ENCODE measurements at regions of chr6 and their contacts with region 1.

Region 1: GRCh38 chr6:13908955-13909381 is 15.8 kb upstream of the RNF182 start:
- DNase-seq: no peak
- ATAC-seq: peak; percentile 66

Region 2: DNA sequence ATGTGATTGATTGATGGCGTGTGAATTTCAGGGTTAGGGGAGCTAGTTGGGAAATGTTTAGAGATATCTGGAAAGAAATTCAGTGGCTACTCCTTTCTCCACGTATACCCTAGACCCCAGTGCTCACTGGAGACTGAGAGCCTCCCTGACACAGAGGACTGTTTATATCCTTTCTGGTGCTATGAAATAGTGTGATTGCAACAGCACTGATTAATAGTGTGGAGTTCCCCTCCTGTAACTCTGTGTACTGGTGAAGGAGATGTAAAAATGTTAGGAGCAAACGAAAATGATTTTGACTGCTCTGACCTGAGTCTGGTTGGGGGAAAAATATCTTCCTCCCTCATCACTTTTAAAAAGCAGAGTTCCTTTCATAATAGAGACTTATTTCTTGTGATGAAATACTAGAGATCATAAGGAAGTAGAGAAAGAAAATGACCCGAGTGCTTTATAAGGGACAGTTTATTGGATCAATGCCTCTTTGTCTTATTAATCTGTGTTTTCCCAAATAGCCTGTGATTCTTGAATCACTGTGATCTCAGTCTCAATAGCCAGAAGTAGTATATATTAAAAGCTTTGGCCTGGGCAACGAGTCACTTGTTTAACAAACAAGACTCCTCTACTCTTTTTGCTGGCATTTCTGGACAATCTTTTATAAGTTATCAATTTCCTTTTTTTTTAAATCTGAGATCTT is 108.1 kb after region 1 on chr6:
- intact Hi-C with region 1: no loop called
- DNase-seq: no peak
- ATAC-seq: no peak

Region 3: GRCh38 chr6:14046476-14047068 is 137.6 kb after region 1 on chr6:
- intact Hi-C with region 1: loop called (anchors 5 kb)
- DNase-seq: no peak
- ATAC-seq: peak; percentile 58

Region 4: DNA sequence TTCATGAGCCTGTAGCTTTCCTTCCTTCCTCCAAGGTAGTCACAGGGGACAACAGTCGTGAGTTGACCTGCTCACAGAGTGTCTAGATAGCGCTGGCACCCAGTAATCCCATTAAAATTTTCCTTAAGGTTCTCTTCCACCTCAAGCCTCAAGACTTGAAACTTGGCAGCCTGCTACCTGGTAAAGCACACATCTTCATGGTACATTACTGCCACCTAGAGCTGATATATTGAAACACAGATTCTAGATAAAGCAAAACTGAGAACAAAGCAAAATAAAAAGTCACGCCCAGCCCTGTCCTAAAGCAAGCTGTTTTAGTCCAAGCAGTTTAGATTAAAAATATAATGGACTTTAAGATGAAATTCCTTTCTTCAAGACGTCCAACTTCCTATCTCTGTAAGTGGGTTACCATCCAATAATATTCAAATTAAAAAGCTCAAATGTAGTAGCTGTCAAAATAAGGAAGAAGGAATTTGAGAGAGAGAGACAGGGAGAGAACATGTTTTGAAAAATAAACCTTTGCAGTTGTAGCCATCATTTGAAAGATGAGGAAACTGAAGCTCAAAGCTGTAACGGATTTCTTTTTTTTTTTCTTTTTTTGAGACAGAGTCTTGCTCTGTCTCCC is 157.9 kb after region 1 on chr6:
- intact Hi-C with region 1: loop called (anchors 5 kb)
- DNase-seq: no peak
- ATAC-seq: peak; percentile 79

Region 5: GRCh38 chr6:14144678-14145113 is 235.7 kb after region 1 on chr6:
- intact Hi-C with region 1: loop called (anchors 5 kb)
- DNase-seq: peak; percentile 73
- ATAC-seq: peak; percentile 84